Heart right ventricle (tissue), 16 donors: ENCODE measurements at regions of chr13 and their contacts with region 1.

Region 1: GRCh38 chr13:95100525-95101433 is 200.5 kb downstream of the ABCC4 start:
- DNase-seq: no peak
- ATAC-seq: no peak
- H3K4me3 ChIP-seq: no peak overlapping the region
- H3K27ac ChIP-seq: no peak overlapping the region
- H3K4me1 ChIP-seq: no peaks in the 10 kb centered on the region
- H3K27me3 ChIP-seq: no peaks in the 10 kb centered on the region
- CTCF ChIP-seq: no peak

Region 2: DNA sequence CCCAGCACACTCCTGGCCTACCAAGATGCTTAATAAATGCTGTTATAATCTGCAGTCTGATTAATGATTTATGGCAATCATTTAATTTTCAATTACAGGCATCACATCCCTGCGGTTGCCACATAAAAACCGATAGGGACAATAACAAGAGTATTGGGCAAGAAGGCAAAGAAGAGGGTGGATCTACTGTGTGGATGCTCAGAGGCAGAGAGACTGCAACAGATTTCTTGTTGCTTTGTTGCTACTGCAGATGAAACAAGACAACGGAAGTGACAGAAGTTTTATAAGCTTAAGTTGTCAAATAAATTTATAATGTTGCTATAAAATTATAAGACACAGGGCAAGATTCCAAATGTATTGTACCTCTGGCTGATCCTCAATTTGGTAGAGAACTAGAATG is 45.7 kb after region 1 on chr13:
- intact Hi-C with region 1: loop called in 1 of 10 experiments (anchors 1 kb)
- DNase-seq: no peak
- ATAC-seq: no peak
- H3K4me3 ChIP-seq: no peak overlapping the region
- H3K27ac ChIP-seq: no peak overlapping the region
- H3K4me1 ChIP-seq: no peaks in the 10 kb centered on the region
- H3K27me3 ChIP-seq: no peaks in the 10 kb centered on the region
- CTCF ChIP-seq: no peak

Region 3: GRCh38 chr13:95355494-95355893 is 254.7 kb after region 1 on chr13:
- intact Hi-C with region 1: no loop called
- DNase-seq: no peak
- ATAC-seq: no peak
- H3K4me3 ChIP-seq: no peak overlapping the region
- H3K27ac ChIP-seq: peak overlapping the region in 2 of 10 donors; percentile 22 to 41
- H3K4me1 ChIP-seq: peaks cover 0 to 16% (median 8%) of the 10 kb centered on the region in 9 donors
- H3K27me3 ChIP-seq: no peaks in the 10 kb centered on the region
- CTCF ChIP-seq: no peak